SK-N-SH (cell line): ENCODE measurements at regions of chr3 and their contacts with region 1.

Region 1: DNA sequence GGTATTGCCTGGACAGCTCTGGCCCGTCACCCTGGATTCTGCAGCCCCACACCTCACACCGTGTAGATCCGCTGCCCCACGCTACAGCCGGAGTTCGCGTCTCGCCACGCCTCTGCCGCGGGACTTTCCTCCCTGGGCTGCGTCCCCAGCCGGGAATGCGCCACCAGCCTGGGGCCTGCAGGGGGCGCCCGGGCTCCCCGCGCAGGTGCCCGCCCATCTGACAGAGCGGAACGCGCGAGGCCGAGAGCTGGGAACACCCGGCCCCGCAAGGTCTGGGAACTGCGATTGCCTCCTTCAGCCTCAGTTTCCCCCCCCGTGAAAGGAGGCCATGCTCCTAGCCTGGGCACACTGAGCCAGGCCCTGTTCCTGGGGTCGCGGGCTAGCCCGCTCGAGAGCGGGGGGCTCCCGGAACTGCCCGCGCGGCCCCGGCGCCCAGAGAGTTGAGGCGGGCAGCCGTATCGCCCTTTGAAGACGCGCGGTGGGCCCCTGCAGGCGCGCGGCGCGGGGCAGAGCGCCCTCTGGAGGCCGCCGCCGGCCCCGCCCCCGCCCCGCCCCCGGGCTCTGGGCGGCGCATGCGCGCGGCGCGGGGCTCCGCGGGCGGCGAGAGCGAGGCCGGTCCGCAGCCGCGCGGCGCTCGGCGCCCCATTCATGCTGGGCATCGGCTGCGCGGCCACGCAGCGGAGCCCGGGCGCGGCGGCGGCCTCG is at the start of gene PLXNA1:
- DNase-seq: peak; percentile 97
- H3K4me3 ChIP-seq: peak within 1 kb of the TSS; percentile 84 to 89
- H3K27ac ChIP-seq: peak within 1 kb of the TSS; percentile 53; a peak in 3 of 4 replicates
- H3K4me1 ChIP-seq: peaks cover 10 to 41% of the 10 kb centered on the region in 2 experiments; a peak in 2 of 4 replicates
- H3K27me3 ChIP-seq: no peaks in the 10 kb centered on the region
- CTCF ChIP-seq: peak; percentile 81
- EP300 ChIP-seq: no peak
- RAD21 ChIP-seq: peak; percentile 53
- polyA plus RNA-seq, gene PLXNA1: 48.1 and 48.7 TPM in 2 replicates

Region 2: GRCh38 chr3:126939338-126939718 is 43.3 kb before region 1 on chr3:
- CTCF ChIA-PET with region 1: interaction called, 12 read pairs
- POLR2A ChIA-PET with region 1: interaction called, 3 read pairs
- DNase-seq: peak; percentile 48
- H3K4me3 ChIP-seq: no peak overlapping the region
- H3K27ac ChIP-seq: peak overlapping the region; percentile 27 to 43; a peak in 3 of 4 replicates
- H3K4me1 ChIP-seq: peaks cover 32 to 43% of the 10 kb centered on the region in 2 experiments
- H3K27me3 ChIP-seq: no peaks in the 10 kb centered on the region
- CTCF ChIP-seq: peak; percentile 30
- EP300 ChIP-seq: no peak
- RAD21 ChIP-seq: peak; percentile 53

Region 3: DNA sequence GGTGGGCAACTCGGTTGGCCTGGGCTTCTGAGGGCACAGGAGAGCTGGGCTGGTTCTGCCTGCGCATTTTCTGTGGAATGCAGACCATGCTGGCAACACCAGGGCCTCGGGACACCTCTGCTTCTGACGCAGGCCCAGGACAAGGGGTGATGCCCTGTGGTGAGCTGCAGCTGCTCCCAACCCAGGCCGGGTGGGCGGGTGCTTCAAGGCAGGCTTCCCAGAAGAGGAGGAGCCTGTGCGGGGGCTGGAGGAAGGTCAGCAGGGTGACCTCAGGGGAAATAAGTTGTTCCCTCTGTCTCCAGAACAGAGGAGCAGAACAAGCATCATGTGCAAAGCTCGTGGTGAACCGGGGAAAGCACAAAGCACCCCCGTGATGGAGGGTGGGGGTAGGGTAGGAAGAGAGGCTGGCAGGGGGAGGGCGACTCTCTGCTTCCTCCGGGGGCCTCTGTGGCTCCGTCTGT is 10.7 kb before region 1 on chr3:
- CTCF ChIA-PET with region 1: interaction called, 28 read pairs
- POLR2A ChIA-PET with region 1: no interaction called
- DNase-seq: peak; percentile 83
- H3K4me3 ChIP-seq: no peak overlapping the region
- H3K27ac ChIP-seq: peak overlapping the region in 1 of 2 experiments; percentile 60; a peak in 1 of 4 replicates
- H3K4me1 ChIP-seq: peaks cover 0 to 18% of the 10 kb centered on the region in 2 experiments; a peak in 1 of 4 replicates
- H3K27me3 ChIP-seq: no peaks in the 10 kb centered on the region
- CTCF ChIP-seq: no peak
- EP300 ChIP-seq: no peak
- RAD21 ChIP-seq: no peak

Region 4: DNA sequence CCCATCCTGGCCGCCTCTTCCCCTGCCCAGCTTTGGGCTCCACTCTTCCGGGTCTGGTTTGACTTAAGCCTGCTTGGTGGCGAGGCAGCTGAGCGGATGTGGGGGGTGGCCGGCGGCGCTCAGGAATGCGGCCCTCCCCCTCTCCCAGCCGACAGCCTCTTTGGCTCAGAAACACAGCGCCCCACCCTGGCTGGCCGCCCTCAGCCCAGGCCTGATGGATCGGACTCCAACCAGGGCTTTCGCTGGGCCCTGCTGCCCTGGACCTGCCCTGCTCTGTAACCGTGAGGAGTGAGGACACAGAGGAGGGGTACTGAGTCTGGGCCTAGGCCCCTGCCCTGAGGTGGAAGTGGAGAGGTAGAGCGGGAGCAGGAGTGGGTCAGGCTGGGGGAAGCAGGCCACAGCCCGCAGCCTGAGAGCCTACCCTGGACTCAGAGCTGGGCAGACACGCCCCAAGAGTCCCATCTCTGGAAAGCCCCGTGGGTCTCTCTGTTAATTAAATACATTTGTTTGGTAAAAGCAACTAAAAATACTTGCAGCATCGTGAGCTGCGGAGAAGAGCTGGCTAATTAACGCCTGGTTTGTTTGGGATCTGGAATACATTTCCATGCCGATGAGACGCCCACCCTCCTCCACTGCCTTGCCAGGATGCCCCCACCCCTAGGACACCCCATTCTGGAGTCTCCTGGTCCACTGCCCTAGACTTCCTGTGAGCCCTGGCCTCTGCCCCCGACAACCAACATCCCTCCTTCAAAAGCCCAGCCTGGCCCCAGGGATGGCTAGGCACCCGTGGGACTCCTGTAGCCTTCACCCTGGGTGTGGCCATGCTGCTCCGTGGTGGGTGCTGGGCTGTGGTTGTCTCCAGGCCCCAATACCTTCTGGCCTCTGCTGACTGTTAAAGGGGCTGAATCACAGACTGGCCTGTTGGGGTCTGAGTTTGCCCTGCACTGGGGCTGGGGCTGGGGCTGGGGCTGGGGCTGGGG is 19.9 kb after region 1 on chr3:
- CTCF ChIA-PET with region 1: interaction called, 12 read pairs
- POLR2A ChIA-PET with region 1: no interaction called
- DNase-seq: peak; percentile 97
- H3K4me3 ChIP-seq: peak overlapping the region in 1 of 2 experiments; percentile 28; a peak in 1 of 4 replicates
- H3K27ac ChIP-seq: peak overlapping the region; percentile 87 to 97
- H3K4me1 ChIP-seq: peaks cover 23 to 78% of the 10 kb centered on the region in 2 experiments; a peak in 3 of 4 replicates
- H3K27me3 ChIP-seq: no peaks in the 10 kb centered on the region
- CTCF ChIP-seq: peak; percentile 78
- EP300 ChIP-seq: peak in 1 of 2 experiments; percentile 80; a peak in 2 of 4 replicates
- RAD21 ChIP-seq: peak; percentile 47

Region 5: DNA sequence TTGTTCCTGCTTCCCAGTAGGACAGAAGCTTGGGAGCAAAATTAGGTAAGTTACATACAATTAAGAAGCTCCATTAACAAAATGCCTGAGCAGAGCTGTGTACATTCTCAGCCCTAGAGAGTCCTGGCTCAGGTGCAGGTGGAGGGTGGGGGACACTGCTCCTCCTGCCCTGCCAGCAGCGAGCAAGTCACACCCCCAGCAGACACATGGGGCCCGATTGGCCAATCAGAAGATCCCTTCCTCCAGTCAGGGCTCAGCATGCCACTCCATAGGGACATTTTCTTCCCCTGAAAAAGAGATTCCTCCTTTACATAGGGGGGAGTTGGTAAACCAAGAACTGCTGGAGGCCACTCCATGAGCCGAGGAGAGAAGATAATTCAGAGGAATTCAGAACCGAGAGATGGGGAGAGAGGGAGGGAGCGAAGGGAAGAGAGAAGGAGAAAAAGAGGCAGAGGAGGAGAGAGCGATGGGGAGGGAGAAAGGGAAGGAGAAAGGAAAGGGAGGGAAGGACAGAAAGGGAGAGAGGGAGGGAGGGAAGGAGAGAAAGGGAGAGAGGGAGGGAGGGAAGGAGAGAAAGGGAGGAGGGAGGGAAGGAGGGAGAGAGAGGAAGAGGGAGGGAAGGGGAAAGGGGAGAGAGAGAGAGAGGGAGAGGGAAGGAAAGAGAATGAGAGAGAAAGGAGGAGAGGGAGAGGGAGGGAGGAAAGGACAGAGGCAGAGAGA is 62.5 kb after region 1 on chr3:
- CTCF ChIA-PET with region 1: no interaction called
- POLR2A ChIA-PET with region 1: no interaction called
- DNase-seq: peak; percentile 74
- H3K4me3 ChIP-seq: no peak overlapping the region
- H3K27ac ChIP-seq: no peak overlapping the region
- H3K4me1 ChIP-seq: 0 out of 4 replicates have a peak, but pooled peaks cover 0 to 3% of the 10 kb centered on the region in 2 experiments
- H3K27me3 ChIP-seq: no peaks in the 10 kb centered on the region
- CTCF ChIP-seq: no peak
- EP300 ChIP-seq: no peak
- RAD21 ChIP-seq: no peak

Region 6: DNA sequence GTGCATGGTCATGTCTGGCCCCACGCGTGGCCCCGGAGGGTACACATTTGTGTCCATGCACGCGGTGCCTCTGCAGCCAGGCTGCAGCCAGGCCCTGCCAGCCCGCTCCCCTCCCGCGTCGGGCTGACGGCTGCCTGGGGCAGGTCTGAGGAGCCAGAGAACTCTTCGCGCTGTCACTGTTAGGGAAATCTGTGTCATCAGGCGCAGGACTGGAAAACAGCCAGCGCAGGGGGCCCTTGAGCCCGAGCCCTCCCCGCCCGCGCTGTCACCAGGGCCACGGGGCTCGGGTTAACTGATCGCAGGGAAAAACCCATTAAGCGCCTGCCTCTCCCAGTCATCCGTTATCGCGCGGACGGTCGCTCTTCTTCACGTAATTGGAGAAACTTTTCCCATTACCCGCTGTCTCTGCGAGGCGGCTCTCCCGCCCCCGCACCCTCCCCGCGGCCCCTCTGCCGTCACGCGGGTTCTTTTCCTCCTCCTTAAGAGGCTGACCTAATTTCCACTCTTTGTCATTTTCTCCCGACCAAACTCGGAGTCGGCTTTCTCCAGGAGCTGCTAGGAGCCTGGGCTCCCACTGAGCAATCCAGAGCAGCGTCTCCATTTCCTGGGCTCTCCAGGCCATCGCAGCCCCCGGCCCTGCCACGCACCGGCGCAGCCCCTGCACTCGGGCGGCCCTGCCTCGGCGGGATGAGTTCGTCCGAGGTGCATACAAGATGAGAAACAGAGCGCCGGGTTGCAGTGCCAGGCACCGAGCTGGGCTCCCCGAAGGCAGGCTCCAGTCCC is 152.8 kb after region 1 on chr3:
- CTCF ChIA-PET with region 1: interaction called, 11 read pairs
- POLR2A ChIA-PET with region 1: no interaction called
- DNase-seq: peak; percentile 92
- H3K4me3 ChIP-seq: peak overlapping the region; percentile 32
- H3K27ac ChIP-seq: peak overlapping the region in 1 of 2 experiments; percentile 64; a peak in 2 of 4 replicates
- H3K4me1 ChIP-seq: peaks cover 8 to 71% of the 10 kb centered on the region in 2 experiments; a peak in 2 of 4 replicates
- H3K27me3 ChIP-seq: no peaks in the 10 kb centered on the region
- CTCF ChIP-seq: no peak
- EP300 ChIP-seq: peak in 1 of 2 experiments; percentile 69; a peak in 2 of 4 replicates
- RAD21 ChIP-seq: peak; percentile 30

Region 7: DNA sequence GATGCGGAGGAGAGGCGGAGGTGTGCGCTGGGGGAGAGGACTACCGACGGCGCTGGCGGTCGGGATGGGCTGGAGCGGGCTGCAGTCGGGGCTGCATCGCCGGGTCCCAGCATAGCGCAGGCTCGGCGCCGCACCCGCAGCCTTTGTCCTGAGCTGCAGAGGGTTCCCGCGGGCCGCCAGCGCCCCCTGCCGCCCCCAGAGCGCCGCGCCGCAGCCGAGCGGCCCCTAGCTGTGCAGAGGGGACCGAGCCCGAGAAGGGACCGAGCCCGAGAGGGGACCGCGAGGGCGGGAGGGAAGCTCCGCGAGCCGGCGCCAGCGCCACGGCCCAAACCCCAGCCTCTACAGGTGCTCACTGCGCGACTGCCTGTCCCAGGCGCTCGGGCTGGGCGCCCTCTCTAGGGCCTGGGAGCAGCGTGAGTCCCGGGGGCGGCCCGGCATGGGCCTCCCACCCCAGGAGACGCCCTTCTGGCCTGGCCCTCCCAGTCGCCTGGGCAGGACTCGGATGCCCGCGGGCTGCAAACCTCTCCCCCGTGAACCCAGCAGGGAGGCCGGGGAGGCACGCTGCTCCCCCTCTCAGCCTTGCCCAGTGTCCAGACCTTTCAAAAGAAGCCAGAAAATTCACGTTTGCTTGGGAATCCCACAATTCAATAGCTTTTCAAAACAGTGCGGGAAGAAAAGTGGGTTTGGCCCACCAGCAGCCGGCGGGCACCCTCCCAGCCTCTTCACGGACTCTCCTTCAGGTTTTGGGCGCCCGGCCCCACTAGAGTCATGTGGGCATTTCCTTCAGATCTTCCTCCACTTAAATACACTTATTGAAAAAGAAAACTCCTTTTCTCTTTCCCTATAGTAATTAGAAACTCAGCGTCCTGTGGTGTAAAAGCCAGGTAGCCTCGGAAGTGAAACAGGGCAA is 473.2 kb after region 1 on chr3:
- CTCF ChIA-PET with region 1: interaction called, 88 read pairs
- POLR2A ChIA-PET with region 1: no interaction called
- DNase-seq: peak; percentile 98
- H3K4me3 ChIP-seq: peak overlapping the region; percentile 40 to 58; a peak in 3 of 4 replicates
- H3K27ac ChIP-seq: no peak overlapping the region; a peak in 1 of 4 replicates
- H3K4me1 ChIP-seq: peaks cover 7 to 13% of the 10 kb centered on the region in 2 experiments; a peak in 2 of 4 replicates
- H3K27me3 ChIP-seq: no peaks in the 10 kb centered on the region
- CTCF ChIP-seq: peak; percentile 81
- EP300 ChIP-seq: peak in 1 of 2 experiments; percentile 19; a peak in 1 of 4 replicates
- RAD21 ChIP-seq: peak; percentile 91